Common myeloid progenitor, CD34-positive (primary cell): ENCODE measurements at regions of chr7 and their contacts with region 1.

Region 1: DNA sequence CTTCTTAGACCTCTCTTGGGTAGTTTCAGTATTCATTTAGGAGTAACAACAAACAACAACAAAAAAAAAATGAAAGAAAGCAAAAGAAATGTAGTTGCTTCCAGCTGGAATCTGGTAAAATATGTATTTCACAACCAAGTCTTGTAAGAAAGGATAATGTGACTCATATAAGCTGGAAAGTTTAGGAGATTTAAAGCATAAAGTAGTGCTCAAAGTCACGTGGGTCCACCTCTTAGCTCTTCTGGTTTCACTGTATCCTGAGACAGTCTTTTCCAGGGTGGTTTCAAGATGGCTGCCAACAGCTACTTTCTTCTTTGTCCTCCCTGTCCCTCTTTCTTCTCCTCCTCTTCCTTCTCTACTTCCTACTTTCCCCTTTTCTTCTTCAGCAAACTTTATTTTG is 69.5 kb upstream of the CDK13 start:
- DNase-seq: no peak
- H3K4me3 ChIP-seq: no peak overlapping the region
- H3K27ac ChIP-seq: no peak overlapping the region
- H3K4me1 ChIP-seq: peaks cover 0 to 3% (median 0%) of the 10 kb centered on the region in 4 experiments
- H3K27me3 ChIP-seq: no peaks in the 10 kb centered on the region

Region 2: GRCh38 chr7:39894904-39895303 is 14.3 kb after region 1 on chr7:
- CTCF ChIA-PET with region 1: interaction called, 19 read pairs
- POLR2A ChIA-PET with region 1: no interaction called
- DNase-seq: no peak
- H3K4me3 ChIP-seq: no peak overlapping the region
- H3K27ac ChIP-seq: no peak overlapping the region
- H3K4me1 ChIP-seq: peaks cover 0 to 3% (median under 1%) of the 10 kb centered on the region in 4 experiments
- H3K27me3 ChIP-seq: no peaks in the 10 kb centered on the region

Region 3: DNA sequence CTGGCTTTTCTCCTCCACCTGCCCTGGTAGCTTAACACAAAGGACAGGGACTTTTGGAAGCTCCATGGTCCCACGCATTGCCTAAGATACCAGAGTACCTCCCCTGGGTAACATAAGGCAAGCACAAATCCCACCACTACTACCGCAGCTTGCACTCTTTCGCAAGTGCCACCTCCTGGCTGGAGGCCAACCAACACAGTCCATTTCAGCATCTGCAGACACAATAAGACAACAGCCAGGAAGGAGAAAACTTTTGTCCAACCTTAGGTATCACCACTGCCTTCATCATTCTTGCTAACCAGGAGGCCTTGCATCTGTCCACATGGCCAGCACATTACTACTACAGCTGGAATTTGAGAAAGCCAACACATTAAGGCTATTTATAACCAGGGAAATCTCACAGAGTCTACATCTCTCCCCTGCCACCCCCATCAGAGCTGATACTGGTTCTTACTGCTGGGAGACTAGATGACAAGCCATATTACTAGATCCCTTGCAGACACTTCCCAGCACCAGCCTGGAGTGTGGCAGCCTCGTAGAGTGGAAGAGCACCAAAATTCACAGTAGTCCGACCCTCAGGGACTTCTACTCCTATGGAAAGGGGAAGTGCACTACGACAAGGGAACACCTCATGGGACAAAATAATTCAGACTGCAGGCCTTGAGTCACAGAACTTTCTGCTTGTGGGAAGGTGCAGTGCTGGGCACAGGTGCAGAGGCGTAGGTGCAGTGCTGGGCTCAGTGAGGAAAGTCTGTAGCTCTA is 29.7 kb after region 1 on chr7:
- CTCF ChIA-PET with region 1: no interaction called
- POLR2A ChIA-PET with region 1: no interaction called
- DNase-seq: peak in 2 of 3 donors; percentile 6 to 22
- H3K4me3 ChIP-seq: no peak overlapping the region
- H3K27ac ChIP-seq: no peak overlapping the region
- H3K4me1 ChIP-seq: no peaks in the 10 kb centered on the region
- H3K27me3 ChIP-seq: no peaks in the 10 kb centered on the region

Region 4: DNA sequence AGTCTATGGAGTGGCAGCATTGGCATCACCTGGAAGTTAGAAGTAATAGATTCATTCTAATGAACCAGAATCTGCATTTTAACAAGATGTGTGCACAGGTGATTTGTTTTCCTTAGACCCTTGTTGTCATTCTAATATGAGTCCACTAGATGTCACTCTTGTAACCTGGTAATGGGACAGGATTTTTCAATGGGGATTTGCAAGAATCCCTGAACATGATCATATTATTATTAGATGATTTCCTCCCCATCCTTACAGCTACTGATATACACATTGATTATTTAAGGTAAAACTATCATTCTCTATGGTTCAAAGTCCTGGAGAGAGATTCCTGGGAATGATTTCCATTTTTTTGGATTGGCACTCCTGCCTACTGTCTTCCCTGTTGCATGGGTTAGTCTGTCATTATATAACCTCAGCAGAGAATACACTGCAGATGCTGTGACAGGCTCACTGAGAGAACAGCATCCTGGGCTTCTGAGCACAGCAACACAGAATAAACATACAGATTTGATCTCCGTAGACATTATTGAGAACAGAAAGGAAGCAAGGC is 449.1 kb after region 1 on chr7:
- CTCF ChIA-PET with region 1: no interaction called
- POLR2A ChIA-PET with region 1: no interaction called
- DNase-seq: peak; percentile 51 to 75 (median 73)
- H3K4me3 ChIP-seq: no peak overlapping the region
- H3K27ac ChIP-seq: no peak overlapping the region
- H3K4me1 ChIP-seq: peaks cover 0 to 2% (median 0%) of the 10 kb centered on the region in 4 experiments
- H3K27me3 ChIP-seq: no peaks in the 10 kb centered on the region